AG04449 (cell line): ENCODE measurements at regions of chr16 and their contacts with region 1.

Region 1: DNA sequence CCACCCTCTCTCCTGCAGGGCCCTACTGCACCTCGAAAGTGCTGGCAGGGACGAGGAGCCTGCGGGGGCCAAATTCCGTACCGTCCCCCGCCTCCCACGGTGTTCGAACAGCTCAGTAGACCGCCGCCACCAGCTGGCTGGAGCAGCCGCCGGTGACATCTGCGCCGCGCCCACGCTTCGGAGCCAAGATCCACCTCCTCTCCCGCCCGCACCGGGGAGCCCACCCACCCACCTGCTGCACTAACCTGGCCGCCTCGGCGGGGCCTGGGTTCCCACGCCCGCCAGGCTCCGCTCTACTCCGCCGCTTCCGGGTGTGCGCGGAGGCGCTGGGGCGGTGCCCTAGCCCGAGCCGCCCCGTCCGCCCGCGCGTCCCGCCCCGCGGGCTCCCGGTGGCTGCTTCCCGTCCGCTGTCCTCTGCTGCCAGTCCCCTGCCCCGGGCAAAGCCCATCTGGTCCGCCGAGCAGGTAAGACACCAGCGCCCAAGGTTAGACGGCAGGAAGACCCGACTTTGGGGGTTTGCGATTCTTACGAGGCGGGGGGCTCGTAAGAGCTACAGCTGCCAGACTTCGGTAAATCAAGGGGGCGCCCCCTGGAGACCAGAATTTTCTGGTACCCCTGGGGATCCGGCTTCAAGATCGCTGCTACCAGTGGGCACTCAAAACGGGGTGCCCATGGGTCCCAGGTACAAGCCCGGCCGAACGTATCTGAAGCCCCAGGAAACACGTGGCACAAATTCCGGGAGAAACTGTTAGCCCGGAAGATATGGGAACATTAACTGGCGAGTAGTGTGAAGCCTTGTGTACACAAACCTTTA is at the starts of genes FBXL8 and TRADD:
- DNase-seq: no peak
- H3K4me3 ChIP-seq: peak within 1 kb of the TSS; percentile 93
- CTCF ChIP-seq: peak; percentile 34

Region 2: DNA sequence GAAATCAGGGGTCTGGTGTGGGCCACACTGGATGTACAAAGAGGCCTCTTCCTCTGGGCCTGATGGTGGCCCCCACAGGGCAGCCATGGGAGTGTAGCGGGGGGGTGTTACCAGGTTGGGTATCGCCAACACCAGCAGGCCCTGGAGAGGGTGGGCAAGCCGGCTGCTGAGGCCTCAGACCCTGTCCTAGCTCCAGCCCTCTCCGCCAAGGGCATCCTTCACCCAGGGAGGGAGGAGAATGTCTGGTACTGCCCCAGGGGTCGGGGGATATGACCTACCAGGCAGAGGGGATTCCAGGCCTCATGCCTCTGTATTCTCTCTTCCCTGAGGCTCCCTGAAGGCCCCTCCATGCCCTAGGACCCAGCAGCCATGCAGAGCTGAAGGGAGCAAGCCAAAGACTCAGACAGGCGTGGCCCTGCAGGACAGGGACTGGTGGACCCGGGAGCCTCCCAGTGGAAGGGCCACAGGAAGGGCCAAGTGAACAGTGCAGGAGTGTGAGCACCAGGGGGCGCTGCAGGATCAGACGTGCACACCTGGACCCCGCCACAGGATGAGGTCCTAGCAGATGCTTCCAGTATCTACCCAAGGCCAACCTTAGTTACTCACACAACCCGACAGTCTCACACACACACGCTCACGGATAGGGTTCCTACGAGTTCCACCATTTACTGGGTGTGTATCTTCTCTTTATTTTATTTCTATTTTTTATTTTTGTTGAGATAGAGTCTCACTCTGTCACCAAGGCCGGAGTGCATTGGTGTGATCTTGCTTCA is 182.3 kb before region 1 on chr16:
- CTCF ChIA-PET with region 1: interaction called, 241 read pairs
- POLR2A ChIA-PET with region 1: no interaction called
- DNase-seq: no peak
- H3K4me3 ChIP-seq: no peak overlapping the region
- CTCF ChIP-seq: peak; percentile 98

Region 3: GRCh38 chr16:67006930-67007658 is 152.7 kb before region 1 on chr16:
- CTCF ChIA-PET with region 1: interaction called, 49 read pairs
- POLR2A ChIA-PET with region 1: interaction called, 3 read pairs
- DNase-seq: no peak
- H3K4me3 ChIP-seq: no peak overlapping the region
- CTCF ChIP-seq: no peak

Region 4: DNA sequence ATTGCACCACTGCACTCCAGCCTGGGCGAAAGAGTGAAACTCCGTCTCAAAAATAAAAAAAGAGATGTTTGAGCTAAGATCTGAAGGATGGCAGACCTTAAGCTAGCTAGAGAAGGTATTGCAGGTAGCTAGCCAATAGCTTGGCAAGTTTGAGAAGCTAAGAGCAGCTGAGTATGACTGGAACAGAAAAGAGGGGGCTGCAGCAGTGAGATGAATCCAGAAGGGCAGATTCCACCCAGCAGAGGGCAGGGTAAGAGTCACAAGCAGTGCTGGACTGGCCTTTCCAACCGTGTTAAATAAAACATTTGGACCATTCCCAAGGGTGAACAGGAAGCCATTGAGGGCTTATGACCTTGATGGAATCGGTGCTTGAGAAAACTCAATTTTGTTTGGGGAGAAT is 55.7 kb before region 1 on chr16:
- CTCF ChIA-PET with region 1: interaction called, 14 read pairs
- POLR2A ChIA-PET with region 1: interaction called, 3 read pairs
- DNase-seq: no peak
- H3K4me3 ChIP-seq: no peak overlapping the region
- CTCF ChIP-seq: peak; percentile 38

Region 5: DNA sequence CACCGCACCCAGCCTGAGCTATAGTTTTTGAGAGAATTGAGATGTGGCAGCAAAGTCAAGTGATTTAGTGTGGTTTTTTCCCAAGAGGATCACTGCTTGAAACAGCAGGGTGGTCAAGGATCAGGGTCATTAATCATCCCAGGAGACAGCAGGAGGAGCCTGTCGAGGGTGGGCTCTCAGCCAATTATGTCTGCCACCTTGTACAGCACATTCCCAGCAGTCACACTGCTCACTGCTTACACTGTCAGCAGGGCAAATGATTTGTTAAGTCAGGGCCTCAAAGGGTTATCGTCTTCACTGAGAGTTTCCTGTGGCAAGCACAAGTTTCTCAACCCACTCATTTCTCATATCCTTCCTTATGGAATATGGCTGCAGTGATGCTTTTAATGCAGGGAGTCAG is 22.2 kb before region 1 on chr16:
- CTCF ChIA-PET with region 1: interaction called, 91 read pairs
- POLR2A ChIA-PET with region 1: no interaction called
- DNase-seq: no peak
- H3K4me3 ChIP-seq: no peak overlapping the region
- CTCF ChIP-seq: no peak

Region 6: DNA sequence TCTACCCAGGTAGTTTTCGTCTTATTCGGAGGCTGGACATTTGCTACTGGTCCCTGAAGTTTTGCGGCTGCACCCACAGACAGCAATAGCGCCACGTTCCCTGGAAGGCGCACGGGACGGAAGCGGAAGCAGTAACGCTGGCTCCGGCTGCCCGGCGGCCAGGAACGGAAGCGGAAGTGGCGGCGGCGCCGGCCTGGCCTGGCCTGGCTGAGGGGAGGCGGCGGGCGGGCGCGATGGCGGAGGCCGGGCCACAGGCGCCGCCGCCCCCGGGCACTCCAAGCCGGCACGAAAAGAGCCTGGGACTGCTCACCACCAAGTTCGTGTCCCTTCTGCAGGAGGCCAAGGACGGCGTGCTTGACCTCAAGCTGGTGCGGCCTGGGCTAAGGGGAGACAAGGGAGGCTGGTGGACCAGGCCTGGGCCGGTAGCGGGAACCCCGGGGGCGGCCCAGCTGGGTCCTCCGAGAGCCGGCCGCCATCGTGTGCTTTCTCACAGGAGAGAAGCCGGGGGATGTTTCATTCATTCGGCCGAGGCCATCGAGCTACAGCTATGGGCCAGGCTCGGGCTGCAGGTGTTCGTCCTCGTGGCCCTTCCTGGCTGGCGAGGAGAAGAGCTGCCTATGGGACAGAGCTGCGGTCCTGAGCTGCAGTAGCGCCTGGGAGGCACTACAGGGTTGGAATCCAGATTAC is 32.3 kb after region 1 on chr16 and contains the start of gene E2F4:
- CTCF ChIA-PET with region 1: interaction called, 50 read pairs
- POLR2A ChIA-PET with region 1: no interaction called
- DNase-seq: peak; percentile 40
- H3K4me3 ChIP-seq: peak within 1 kb of the TSS; percentile 97
- CTCF ChIP-seq: no peak